Activated naive CD4-positive, alpha-beta T cell treated with anti-CD3 and anti-CD28 coated beads for 36 hours (primary cell): ENCODE measurements at regions of chr6 and their contacts with region 1.

Region 1: DNA sequence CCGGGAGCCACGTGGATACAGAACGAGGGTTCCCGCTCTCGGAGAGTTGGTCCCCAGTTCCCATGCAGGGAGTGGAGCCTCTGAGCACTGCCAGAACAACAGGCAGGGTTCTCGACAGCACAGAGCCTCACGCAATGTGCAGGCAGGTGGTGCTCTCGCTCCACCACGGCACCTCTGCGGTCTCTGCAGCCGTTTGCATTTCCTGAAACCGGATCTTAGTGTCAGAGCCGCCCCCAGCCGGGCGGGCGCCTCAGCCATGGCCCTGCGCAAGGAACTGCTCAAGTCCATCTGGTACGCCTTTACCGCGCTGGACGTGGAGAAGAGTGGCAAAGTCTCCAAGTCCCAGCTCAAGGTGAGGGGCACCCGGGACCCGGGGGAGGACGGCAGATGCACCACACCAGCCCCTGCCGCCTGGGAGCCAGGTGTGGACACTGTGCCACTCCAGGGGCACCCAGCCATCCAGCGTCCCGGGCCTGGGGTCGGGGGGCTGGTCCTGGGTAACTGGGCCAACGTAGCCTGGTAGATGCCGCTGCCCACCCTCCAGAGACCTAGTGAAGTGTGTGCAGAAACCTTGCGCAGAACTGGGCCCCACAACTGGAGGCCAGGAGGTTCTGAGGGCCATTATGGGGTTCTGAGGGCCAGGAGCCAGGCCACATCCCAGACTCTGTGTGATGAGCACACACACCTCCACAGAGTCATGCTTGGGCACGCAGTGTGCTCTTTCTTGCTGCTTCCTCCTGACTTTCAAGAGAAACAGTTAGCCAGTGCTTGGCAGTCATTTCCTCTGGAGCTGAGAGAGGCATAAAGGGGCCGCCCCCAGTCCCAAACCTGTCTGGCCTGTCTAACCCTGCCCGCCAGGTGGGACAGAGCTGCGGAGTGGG is at the start of gene DEF6:
- DNase-seq: peak; percentile 95
- H3K4me3 Mint-ChIP-seq: peak within 1 kb of the TSS; percentile 81
- H3K27ac Mint-ChIP-seq: peak within 1 kb of the TSS; percentile 94
- H3K4me1 Mint-ChIP-seq: peaks cover 41% of the 10 kb centered on the region
- H3K27me3 Mint-ChIP-seq: no peaks in the 10 kb centered on the region
- total RNA-seq, gene DEF6: 89.9 to 90.6 TPM

Region 2: GRCh38 chr6:35259194-35259947 is 38.5 kb before region 1 on chr6 and contains the start of gene ZNF76:
- CTCF ChIA-PET with region 1: interaction called, 4 read pairs
- intact Hi-C with region 1: loop called (anchors 2 kb)
- DNase-seq: peak; percentile 89
- H3K4me3 Mint-ChIP-seq: peak within 1 kb of the TSS; percentile 96
- H3K27ac Mint-ChIP-seq: peak within 1 kb of the TSS; percentile 86
- H3K4me1 Mint-ChIP-seq: peaks cover 45% of the 10 kb centered on the region
- H3K27me3 Mint-ChIP-seq: no peaks in the 10 kb centered on the region
- total RNA-seq, gene ZNF76: 32.4 to 38.2 TPM

Region 3: DNA sequence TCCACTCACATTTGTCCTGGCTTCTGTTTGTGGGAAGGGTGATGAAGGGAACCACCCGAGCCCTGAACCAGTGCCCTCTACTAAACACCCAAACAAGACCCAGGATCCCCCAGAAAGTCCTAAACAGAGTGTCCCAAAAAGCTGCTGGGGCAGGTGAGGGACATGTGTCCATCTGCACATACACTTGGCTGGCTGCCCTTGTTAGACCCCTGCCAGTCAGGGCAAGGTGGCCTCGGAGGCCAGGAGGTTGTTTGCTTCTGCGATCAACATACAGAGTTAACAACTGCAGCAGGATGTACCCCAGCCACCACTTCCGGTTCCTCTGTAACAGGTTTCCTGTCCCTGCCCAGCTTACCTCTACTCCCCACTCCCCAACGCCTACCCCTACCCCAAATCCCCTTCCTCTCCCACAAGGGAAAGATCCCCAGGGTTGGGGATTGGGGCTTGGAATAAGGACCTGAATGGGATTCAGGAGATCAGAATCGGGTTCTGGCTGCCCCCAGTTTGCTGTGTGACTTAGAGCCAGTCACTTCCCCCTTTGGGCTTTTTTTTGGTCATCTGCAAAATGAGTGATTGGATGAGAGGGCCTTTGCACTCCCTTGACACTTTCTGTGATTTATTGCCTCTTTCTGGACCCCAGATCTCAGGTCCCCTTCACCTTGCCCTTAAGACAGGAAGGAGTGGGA is 13.7 kb after region 1 on chr6:
- CTCF ChIA-PET with region 1: interaction called, 19 read pairs
- intact Hi-C with region 1: loop called (anchors 1 kb)
- DNase-seq: peak; percentile 71
- H3K4me3 Mint-ChIP-seq: peak overlapping the region; percentile 61
- H3K27ac Mint-ChIP-seq: peak overlapping the region; percentile 95
- H3K4me1 Mint-ChIP-seq: peaks cover 85% of the 10 kb centered on the region
- H3K27me3 Mint-ChIP-seq: no peaks in the 10 kb centered on the region

Region 4: GRCh38 chr6:35342258-35343091 is 44.6 kb after region 1 on chr6 and contains the start of gene PPARD:
- CTCF ChIA-PET with region 1: interaction called, 17 read pairs
- intact Hi-C with region 1: loop called (anchors 1 kb)
- DNase-seq: peak; percentile 99
- H3K4me3 Mint-ChIP-seq: peak within 1 kb of the TSS; percentile 97
- H3K27ac Mint-ChIP-seq: peak within 1 kb of the TSS; percentile 89
- H3K4me1 Mint-ChIP-seq: peaks cover 37% of the 10 kb centered on the region
- H3K27me3 Mint-ChIP-seq: no peaks in the 10 kb centered on the region
- total RNA-seq, gene PPARD: 10.8 to 11.2 TPM

Region 5: GRCh38 chr6:35415065-35415991 is 117.5 kb after region 1 on chr6:
- CTCF ChIA-PET with region 1: interaction called, 11 read pairs
- intact Hi-C with region 1: no loop called
- DNase-seq: peak; percentile 51
- H3K4me3 Mint-ChIP-seq: no peak overlapping the region
- H3K27ac Mint-ChIP-seq: peak overlapping the region; percentile 10
- H3K4me1 Mint-ChIP-seq: peaks cover 44% of the 10 kb centered on the region
- H3K27me3 Mint-ChIP-seq: no peaks in the 10 kb centered on the region

Region 6: GRCh38 chr6:35468181-35468979 is 170.5 kb after region 1 on chr6 and contains the start of gene RPL10A:
- CTCF ChIA-PET with region 1: interaction called, 13 read pairs
- intact Hi-C with region 1: loop called (anchors 1 kb)
- DNase-seq: peak; percentile 98
- H3K4me3 Mint-ChIP-seq: peak within 1 kb of the TSS; percentile 95
- H3K27ac Mint-ChIP-seq: peak within 1 kb of the TSS; percentile 95
- H3K4me1 Mint-ChIP-seq: peaks cover 39% of the 10 kb centered on the region
- H3K27me3 Mint-ChIP-seq: no peaks in the 10 kb centered on the region
- total RNA-seq, gene RPL10A: 2,437 to 2,507 TPM